Activated T-helper 1 cell treated with anti-CD3 and anti-CD28 coated beads, Interleukin-12 subunit alpha, Interleukin-12 subunit beta, Interleukin-2, Interleukin-4 antibody, amounts not matched to agents 30 ng/mL and 10 ng/mL and 1 ng/mL, durations not matched to agents 14 hours and 24 hours and 36 hours (primary cell): ENCODE measurements at regions of chr2 and their contacts with region 1.

Region 1: GRCh38 chr2:101883863-101884262 is 107.9 kb upstream of the IL1R2 start:
- DNase-seq: no peak
- H3K4me3 Mint-ChIP-seq: no peak overlapping the region
- H3K27ac Mint-ChIP-seq: no peak overlapping the region
- H3K4me1 Mint-ChIP-seq: peaks cover 6% of the 10 kb centered on the region
- H3K27me3 Mint-ChIP-seq: no peaks in the 10 kb centered on the region

Region 2: DNA sequence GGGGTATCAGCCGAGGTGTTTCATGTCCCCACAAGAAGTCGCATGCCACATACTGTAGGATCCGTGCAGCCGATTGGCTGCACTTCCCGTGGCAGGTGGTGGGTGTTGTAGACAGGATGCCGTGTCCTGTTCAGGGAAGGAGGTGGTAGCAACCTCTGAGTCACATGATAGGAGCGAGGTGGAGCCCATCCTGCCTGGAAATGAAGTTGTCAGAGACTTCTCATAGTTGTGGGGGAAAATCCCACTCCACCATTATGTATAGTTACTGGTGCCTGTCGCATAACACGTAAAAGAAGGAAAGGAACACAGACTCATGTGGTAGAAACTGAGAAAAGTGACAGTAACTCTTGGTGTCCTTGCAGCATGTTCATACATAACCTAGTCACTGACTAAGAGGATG is 16.5 kb after region 1 on chr2:
- intact Hi-C with region 1: loop called (anchors 2 kb)
- DNase-seq: peak; percentile 9
- H3K4me3 Mint-ChIP-seq: peak overlapping the region; percentile 40
- H3K27ac Mint-ChIP-seq: no peak overlapping the region
- H3K4me1 Mint-ChIP-seq: peaks cover 11% of the 10 kb centered on the region
- H3K27me3 Mint-ChIP-seq: no peaks in the 10 kb centered on the region

Region 3: GRCh38 chr2:101991721-101992145 is 107.9 kb after region 1 on chr2 and contains the start of gene IL1R2:
- intact Hi-C with region 1: no loop called
- DNase-seq: no peak
- H3K4me3 Mint-ChIP-seq: no peak within 1 kb of the TSS
- H3K27ac Mint-ChIP-seq: no peak within 1 kb of the TSS
- H3K4me1 Mint-ChIP-seq: peaks cover 7% of the 10 kb centered on the region
- H3K27me3 Mint-ChIP-seq: peaks cover 27% of the 10 kb centered on the region
- total RNA-seq, gene IL1R2: 1.1 and 1.3 TPM in 2 replicates

Region 4: DNA sequence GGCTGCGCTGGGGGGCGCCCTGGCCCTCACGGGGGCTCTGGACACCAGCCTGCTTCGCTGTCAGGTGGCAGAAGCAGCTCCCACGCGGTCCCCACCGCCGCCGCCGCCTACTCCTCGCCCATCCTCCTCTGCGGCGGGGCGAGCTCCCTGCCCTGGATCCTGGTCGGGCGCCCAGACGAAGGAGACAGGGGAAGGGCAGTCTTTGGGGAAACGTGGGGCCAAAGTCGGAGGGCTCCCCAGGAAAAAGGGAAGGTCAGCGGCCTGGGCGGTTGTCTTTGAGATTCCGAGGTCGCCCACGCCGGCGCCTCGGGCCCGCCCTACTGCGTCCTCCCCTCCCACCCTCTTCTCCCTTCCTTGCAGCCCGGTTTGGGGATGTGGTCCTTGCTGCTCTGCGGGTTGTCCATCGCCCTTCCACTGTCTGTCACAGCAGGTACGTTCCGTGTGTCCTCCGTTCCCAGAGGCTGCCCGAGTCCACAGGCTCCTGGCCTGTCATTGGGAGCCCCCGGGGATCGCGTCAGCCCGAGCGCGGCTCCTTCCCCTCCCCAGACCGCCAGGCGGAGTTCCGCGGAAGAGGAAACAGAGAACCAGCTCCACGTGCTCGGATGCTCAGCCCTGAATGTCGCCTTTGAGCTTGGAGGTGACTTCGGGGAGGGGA is 303.8 kb after region 1 on chr2:
- intact Hi-C with region 1: loop called (anchors 10 kb)
- DNase-seq: no peak
- H3K4me3 Mint-ChIP-seq: peak overlapping the region; percentile 73
- H3K27ac Mint-ChIP-seq: peak overlapping the region; percentile 63
- H3K4me1 Mint-ChIP-seq: peaks cover 17% of the 10 kb centered on the region
- H3K27me3 Mint-ChIP-seq: peaks cover 23% of the 10 kb centered on the region

Region 5: GRCh38 chr2:102355526-102356380 is 471.9 kb after region 1 on chr2 and contains the start of gene IL18R1:
- intact Hi-C with region 1: loop called (anchors 5 kb)
- DNase-seq: peak; percentile 71
- H3K4me3 Mint-ChIP-seq: peak within 1 kb of the TSS; percentile 97
- H3K27ac Mint-ChIP-seq: peak within 1 kb of the TSS; percentile 96
- H3K4me1 Mint-ChIP-seq: peaks cover 47% of the 10 kb centered on the region
- H3K27me3 Mint-ChIP-seq: no peaks in the 10 kb centered on the region
- total RNA-seq, gene IL18R1: 57.8 and 61.3 TPM in 2 replicates

Region 6: DNA sequence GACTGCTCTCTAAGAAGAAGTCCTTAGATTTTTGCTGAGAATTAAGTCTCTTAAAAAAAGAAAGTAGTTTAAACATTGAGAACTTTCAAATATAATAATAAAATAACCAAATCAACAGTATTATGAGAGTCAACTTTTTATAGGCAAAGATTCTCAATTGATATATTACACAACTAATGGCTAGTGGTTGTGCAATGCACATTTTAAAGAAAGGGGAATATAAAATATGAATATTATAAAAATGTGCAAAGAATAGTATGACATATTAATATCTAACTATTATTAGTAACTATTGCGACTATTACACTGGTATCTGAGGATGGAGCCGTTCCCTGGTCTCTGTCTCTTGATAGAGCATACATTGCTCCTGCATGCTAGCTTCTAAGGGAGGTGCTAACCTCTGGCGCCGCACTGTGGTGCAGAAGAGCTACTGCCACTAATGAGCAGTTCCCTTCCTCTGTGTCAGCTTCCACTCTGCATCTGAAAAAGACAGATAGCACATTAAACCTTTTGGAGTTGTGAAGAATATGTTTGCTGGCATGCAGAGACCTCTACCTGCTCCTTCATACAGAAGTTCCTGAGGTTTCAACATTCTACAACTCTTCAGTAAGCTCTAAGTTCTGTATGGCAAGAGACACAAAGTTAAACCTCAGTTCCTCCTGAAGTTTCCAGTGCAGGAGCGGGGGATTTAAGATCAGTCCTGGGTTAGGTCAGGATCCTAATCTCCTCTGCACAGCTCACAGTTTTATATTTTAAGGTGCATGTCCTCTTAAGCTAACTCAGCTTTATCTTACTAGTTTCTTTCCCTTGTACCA is 732.0 kb after region 1 on chr2:
- intact Hi-C with region 1: loop called (anchors 5 kb)
- DNase-seq: no peak
- H3K4me3 Mint-ChIP-seq: no peak overlapping the region
- H3K27ac Mint-ChIP-seq: no peak overlapping the region
- H3K4me1 Mint-ChIP-seq: peaks cover 9% of the 10 kb centered on the region
- H3K27me3 Mint-ChIP-seq: peaks cover 56% of the 10 kb centered on the region